GM13976 (cell line): ENCODE measurements at regions of chr13 and their contacts with region 1.

Region 1: DNA sequence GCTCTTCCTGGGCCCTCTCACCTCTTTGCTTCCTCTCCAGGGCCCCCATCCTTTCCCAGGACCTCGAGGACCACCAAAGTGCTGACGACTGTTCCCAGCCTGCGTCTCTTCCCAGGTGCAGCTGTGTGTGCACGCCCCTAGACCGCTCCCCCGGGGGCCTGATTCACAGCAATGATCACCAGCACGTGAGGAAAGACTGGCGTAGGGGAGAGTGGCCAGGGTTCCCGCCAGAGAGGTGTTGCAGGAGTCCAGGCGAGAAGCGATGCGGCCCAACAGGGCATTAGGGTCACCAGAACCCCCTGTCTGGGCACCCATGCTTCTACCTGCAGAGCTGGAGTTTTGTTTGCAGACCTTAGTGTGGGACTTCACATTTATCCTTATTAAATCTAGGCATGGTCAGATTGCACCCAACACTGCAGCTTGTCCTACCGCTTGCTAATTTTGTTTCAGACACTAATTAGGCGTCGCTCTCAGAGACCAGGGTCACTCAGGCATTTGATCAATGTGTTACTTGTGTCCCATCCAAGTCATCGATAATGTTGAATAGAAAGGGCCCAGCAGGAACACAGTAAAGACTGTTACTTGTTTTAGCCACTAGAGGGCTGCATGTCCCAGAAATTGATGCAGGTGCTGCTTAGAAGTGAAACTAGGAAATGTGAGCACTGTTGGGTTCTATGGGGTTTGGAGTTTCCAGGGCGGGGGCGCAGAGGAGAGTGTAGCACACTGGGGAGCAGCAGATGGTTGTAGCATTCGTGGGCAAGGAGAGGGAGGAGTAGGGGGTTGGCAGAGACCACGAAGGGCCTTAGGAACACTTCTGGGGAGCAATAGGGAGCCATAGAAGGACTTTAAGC is 53.2 kb downstream of the CDADC1 start:
- DNase-seq: peak; percentile 87
- CTCF ChIP-seq: peak; percentile 66

Region 2: GRCh38 chr13:48686811-48687210 is 614.2 kb before region 1 on chr13:
- in situ Hi-C with region 1: no loop called
- DNase-seq: no peak
- CTCF ChIP-seq: no peak

Region 3: DNA sequence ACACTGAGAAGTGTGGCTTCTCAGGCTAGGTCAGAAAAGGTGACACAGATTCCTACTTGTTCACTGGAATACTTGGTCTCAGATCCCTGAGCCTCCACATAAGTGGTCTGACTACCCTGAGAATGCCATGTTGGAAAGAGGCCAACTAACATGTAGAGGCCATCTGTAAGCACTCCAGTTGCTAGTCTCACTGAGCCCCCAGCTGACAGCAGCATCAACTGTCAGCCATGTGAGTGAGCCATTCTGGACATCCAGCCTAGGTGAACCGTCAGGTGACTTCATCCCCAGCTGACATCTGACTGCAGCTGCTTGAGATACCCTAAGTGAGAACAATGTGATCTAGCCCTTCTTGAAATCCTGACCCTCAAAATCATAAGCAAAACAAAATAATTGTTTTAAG is 309.2 kb after region 1 on chr13:
- in situ Hi-C with region 1: loop called (anchors 5 kb)
- DNase-seq: no peak
- CTCF ChIP-seq: no peak